ENCODE measurements at regions of chr3 and their contacts with region 1.

Region 1: DNA sequence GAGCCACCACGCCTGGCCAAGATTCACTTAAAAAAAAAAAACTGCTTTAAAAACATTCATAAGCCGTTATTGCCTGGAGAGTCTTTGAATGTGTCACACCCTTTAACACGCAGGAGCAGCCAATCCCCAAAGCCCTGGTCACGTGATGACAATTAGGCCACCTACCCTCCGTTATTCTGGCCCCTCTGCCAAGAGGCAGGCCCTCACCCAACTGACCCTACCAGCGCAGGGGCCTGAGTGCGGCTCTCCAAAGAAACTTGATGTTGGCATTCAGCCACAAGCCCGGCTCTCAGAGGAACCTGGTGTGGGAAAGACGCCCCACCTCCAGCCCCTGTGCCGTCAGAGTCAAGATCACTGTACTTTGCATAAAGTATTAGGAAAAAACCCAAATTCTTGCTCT is 11.6 kb upstream of the MUC4 start:
- DNase-seq: peak in 1 of 2 experiments; percentile 74
- H3K4me3 ChIP-seq: peak overlapping the region; percentile 69; the same call in 1 of the 2 replicates
- H3K27ac ChIP-seq: peak overlapping the region; percentile 95
- H3K4me1 ChIP-seq: peaks cover 59% of the 10 kb centered on the region
- H3K27me3 ChIP-seq: no peaks in the 10 kb centered on the region
- CTCF ChIP-seq: no peak

Region 2: DNA sequence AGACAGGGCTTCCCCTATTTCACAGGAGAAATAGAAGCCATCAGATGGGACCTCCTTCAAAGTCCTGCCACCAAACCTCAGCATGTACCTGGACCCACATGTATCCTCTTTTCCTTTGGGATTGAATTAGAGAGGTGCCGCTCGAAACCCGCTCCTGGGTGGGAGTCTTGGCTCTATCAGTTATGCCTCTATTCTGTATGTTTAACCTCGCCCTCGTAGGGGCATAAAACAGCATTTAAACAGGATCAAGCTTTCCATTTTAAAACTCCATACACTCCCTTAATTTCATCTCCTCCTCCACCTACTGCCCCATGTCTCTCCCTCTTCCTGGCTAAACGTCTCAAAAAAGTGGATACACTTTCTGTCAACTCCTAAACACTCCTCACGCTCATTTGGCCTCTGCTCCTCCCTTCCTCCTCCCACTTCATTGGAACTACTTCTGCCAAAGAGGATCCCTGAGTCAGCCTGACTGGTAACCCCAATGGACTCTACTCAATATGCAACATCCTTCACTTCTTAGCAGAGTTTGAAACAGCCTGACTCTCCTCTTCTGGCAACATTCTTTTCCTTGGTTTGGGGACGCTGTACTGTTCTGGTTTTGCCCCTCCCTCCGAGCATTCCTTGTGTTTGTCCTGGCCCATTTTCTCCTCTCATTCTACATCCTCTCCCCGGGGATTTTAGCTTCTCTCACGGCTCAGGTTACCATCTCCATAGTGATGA is 125.5 kb before region 1 on chr3:
- CTCF ChIA-PET with region 1: no interaction called
- POLR2A ChIA-PET with region 1: no interaction called
- intact Hi-C with region 1: loop called (anchors 1 kb)
- DNase-seq: peak; percentile 77 to 93
- H3K4me3 ChIP-seq: peak overlapping the region; percentile 0; the same call in 1 of the 2 replicates
- H3K27ac ChIP-seq: peak overlapping the region; percentile 90
- H3K4me1 ChIP-seq: peaks cover 39% of the 10 kb centered on the region
- H3K27me3 ChIP-seq: no peaks in the 10 kb centered on the region
- CTCF ChIP-seq: no peak

Region 3: DNA sequence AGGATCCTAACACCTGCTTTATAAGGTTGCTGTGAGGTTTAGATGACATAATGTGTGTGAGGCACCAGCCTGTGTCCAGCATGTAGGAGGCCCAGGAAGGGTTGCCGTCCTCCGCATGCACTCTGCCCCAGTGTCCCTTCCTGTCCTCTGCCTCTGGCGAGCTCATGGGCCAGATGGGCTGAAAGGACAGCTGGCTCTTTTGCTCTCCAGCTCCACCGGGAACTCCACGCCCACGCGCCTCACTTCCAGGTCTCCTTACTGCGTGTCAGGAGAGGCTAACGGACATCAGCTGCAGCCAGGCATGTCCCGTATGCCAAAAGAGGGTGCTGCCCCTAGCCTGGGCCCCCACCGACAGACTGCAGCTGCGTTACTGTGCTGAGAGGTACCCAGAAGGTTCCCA is 90.3 kb before region 1 on chr3:
- CTCF ChIA-PET with region 1: no interaction called
- POLR2A ChIA-PET with region 1: interaction called, 38 read pairs
- intact Hi-C with region 1: no loop called
- DNase-seq: no peak
- H3K4me3 ChIP-seq: no peak overlapping the region
- H3K27ac ChIP-seq: no peak overlapping the region
- H3K4me1 ChIP-seq: no peaks in the 10 kb centered on the region
- H3K27me3 ChIP-seq: no peaks in the 10 kb centered on the region
- CTCF ChIP-seq: no peak

Region 4: DNA sequence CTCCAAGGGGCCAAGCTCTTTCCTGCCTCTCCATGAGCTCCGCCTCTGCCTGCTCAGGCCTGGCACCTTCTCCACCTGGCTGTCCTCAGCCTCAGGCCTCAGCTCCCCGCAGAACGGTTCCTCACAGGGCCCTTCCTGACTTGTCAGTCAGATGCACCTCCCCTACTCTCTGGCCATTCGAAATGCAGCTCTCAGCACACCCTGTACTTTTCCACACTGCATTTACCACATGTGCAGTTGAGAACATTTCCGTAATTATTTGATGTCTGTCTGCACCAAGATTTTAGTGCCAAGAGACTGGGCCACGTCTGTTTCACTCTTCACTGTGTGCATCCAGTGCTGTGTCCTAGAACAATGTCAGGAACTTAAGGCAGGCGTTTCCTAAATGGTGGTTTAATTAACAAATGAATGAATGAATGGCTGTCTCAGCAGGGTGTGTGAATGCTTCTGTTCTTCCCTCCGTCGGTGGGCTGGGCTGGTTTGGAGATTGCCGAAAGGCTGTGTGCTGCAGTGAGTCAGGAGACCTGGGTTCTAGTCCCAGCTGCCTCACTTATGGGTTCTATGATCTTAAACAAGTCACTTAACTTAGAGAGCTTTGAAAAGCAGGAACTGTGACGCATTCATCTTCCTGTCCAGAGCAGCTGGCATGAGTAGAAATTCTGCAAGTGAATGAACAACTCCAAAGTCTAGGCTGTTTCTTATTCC is 16.9 kb before region 1 on chr3:
- CTCF ChIA-PET with region 1: interaction called, 3 read pairs
- POLR2A ChIA-PET with region 1: interaction called, 8 read pairs
- intact Hi-C with region 1: loop called (anchors 1 kb)
- DNase-seq: no peak
- H3K4me3 ChIP-seq: no peak overlapping the region
- H3K27ac ChIP-seq: no peak overlapping the region
- H3K4me1 ChIP-seq: peaks cover 36% of the 10 kb centered on the region
- H3K27me3 ChIP-seq: no peaks in the 10 kb centered on the region
- CTCF ChIP-seq: no peak

Region 5: GRCh38 chr3:196136026-196136984 is 313.0 kb after region 1 on chr3:
- CTCF ChIA-PET with region 1: no interaction called
- POLR2A ChIA-PET with region 1: no interaction called
- intact Hi-C with region 1: no loop called
- DNase-seq: peak; percentile 90 to 99
- H3K4me3 ChIP-seq: peak overlapping the region; percentile 15; the same call in 1 of the 2 replicates
- H3K27ac ChIP-seq: peak overlapping the region; percentile 85
- H3K4me1 ChIP-seq: peaks cover 70% of the 10 kb centered on the region
- H3K27me3 ChIP-seq: no peaks in the 10 kb centered on the region
- CTCF ChIP-seq: no peak

Region 6: GRCh38 chr3:196486263-196486662 is 663.0 kb after region 1 on chr3:
- CTCF ChIA-PET with region 1: no interaction called
- POLR2A ChIA-PET with region 1: no interaction called
- intact Hi-C with region 1: no loop called
- DNase-seq: no peak
- H3K4me3 ChIP-seq: no peak overlapping the region
- H3K27ac ChIP-seq: no peak overlapping the region
- H3K4me1 ChIP-seq: 0 out of 2 replicates have a peak, but pooled peaks cover 6% of the 10 kb centered on the region
- H3K27me3 ChIP-seq: no peaks in the 10 kb centered on the region
- CTCF ChIP-seq: peak; percentile 57; the same call in 1 of the 2 replicates